Activated CD4-positive, alpha-beta memory T cell treated with anti-CD3 and anti-CD28 coated beads for 36 hours (primary cell): ENCODE measurements at regions of chr5 and their contacts with region 1.

Region 1: DNA sequence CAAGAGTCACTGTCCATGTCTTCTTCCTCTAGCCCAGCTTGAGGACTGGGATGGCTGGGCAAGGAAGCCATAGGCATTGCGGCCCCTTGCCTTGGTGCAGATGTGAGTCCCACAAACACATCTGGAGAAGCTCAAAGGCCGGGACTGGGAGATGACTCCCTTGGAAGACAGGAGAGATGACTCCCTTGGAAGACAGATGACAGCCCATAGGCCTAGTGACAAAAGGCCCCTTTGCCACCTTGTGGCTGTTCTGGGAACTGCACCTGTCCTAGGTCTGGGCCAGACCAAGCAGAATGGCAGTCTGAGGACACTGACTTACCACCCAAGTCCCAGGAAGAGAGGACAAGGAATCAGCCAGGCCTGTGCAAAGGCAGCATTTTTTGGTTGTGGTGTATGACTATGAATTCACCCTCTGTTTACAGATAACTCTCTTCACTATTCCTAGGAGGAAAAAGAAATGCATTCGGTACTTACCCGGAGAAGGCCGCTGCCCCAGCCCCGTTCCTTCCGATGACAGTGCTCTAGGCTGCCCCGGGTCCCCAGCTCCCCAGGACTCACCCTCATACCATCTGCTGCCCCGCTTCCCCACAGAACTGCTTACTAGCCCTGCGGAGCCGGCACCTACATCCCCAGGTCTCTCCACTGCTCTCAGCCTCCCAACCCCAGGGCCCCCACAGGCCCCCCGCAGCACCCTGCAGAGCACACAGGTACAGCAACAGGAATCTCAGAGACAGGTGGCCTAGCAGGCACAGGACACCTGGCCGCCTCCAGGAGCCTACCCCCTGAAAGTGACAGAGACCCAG is 30.8 kb downstream of the SKP1 start:
- DNase-seq: peak; percentile 89
- H3K4me3 Mint-ChIP-seq: no peak overlapping the region
- H3K27ac Mint-ChIP-seq: peak overlapping the region; percentile 57
- H3K4me1 Mint-ChIP-seq: peaks cover 24% of the 10 kb centered on the region
- H3K27me3 Mint-ChIP-seq: no peaks in the 10 kb centered on the region

Region 2: GRCh38 chr5:133848341-133848811 is 297.6 kb before region 1 on chr5:
- CTCF ChIA-PET with region 1: no interaction called
- POLR2A ChIA-PET with region 1: no interaction called
- intact Hi-C with region 1: no loop called
- DNase-seq: no peak
- H3K4me3 Mint-ChIP-seq: no peak overlapping the region
- H3K27ac Mint-ChIP-seq: no peak overlapping the region
- H3K4me1 Mint-ChIP-seq: peaks cover 4% of the 10 kb centered on the region
- H3K27me3 Mint-ChIP-seq: peaks cover 27% of the 10 kb centered on the region

Region 3: GRCh38 chr5:133952729-133953567 is 193.0 kb before region 1 on chr5:
- CTCF ChIA-PET with region 1: no interaction called
- POLR2A ChIA-PET with region 1: no interaction called
- intact Hi-C with region 1: no loop called
- DNase-seq: no peak
- H3K4me3 Mint-ChIP-seq: no peak overlapping the region
- H3K27ac Mint-ChIP-seq: no peak overlapping the region
- H3K4me1 Mint-ChIP-seq: peaks cover 11% of the 10 kb centered on the region
- H3K27me3 Mint-ChIP-seq: no peaks in the 10 kb centered on the region

Region 4: GRCh38 chr5:133996683-133997252 is 149.2 kb before region 1 on chr5:
- CTCF ChIA-PET with region 1: no interaction called
- POLR2A ChIA-PET with region 1: no interaction called
- intact Hi-C with region 1: no loop called
- DNase-seq: peak; percentile 22
- H3K4me3 Mint-ChIP-seq: no peak overlapping the region
- H3K27ac Mint-ChIP-seq: no peak overlapping the region
- H3K4me1 Mint-ChIP-seq: peaks cover 55% of the 10 kb centered on the region
- H3K27me3 Mint-ChIP-seq: no peaks in the 10 kb centered on the region

Region 5: GRCh38 chr5:134026521-134027268 is 119.3 kb before region 1 on chr5:
- CTCF ChIA-PET with region 1: interaction called, 981 read pairs
- POLR2A ChIA-PET with region 1: interaction called, 4 read pairs
- intact Hi-C with region 1: no loop called
- DNase-seq: peak; percentile 64
- H3K4me3 Mint-ChIP-seq: no peak overlapping the region
- H3K27ac Mint-ChIP-seq: no peak overlapping the region
- H3K4me1 Mint-ChIP-seq: no peaks in the 10 kb centered on the region
- H3K27me3 Mint-ChIP-seq: no peaks in the 10 kb centered on the region